A549 (cell line): ENCODE measurements at regions of chr16 and their contacts with region 1.

Region 1: GRCh38 chr16:10937068-10937859 is 5.0 kb downstream of the DEXI start:
- DNase-seq: no peak
- ATAC-seq: no peak
- H3K4me3 ChIP-seq: no peak overlapping the region
- H3K27ac ChIP-seq: no peak overlapping the region
- H3K4me1 ChIP-seq: peaks cover 14% of the 10 kb centered on the region
- CTCF ChIP-seq: no peak
- EP300 ChIP-seq: no peak
- POLR2A ChIP-seq: no peak
- RAD21 ChIP-seq: no peak

Region 2: DNA sequence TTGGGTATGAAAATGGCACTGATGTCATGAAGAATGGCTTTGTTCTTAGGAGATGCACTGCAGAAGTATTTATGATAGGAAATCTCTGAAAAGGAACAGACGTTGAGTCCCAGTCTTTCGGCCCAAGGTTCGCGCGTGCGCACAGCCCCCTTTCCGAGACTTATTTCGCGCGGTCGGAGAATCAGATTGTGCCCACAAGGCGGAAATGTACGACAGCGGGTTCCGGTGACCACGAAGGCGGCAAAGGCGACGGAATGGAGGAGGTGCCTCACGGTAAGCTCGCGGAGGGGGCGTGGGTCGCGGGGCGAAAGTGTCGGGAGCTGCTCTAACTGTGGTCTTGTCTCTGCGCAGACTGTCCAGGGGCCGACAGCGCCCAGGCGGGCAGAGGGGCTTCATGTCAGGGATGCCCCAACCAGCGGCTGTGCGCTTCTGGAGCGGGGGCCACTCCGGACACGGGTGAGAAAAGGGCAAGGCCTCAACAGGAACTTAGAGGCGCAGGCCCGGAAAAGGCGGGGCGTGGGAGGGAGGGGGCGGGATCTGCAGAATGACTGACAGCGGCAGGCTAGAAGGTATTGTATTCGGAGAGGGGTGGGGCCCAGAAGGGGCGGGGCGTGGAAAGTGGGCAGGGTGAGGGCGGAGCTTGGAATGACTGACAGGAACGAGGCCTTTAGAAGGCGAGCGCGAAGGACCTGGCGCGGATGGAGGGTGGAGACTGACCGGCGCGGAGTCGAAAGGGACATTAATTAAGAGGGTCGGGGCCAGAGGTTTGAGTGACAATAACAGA is 193.5 kb before region 1 on chr16 and contains the start of gene NUBP1:
- CTCF ChIA-PET with region 1: no interaction called
- POLR2A ChIA-PET with region 1: interaction called, 10 read pairs
- DNase-seq: peak; percentile 93 to 99
- ATAC-seq: peak; percentile 96
- H3K4me3 ChIP-seq: peak within 1 kb of the TSS; percentile 46
- H3K27ac ChIP-seq: peak within 1 kb of the TSS; percentile 89 to 95
- H3K4me1 ChIP-seq: peaks cover 17% of the 10 kb centered on the region; the same call in 2 of the 3 replicates
- CTCF ChIP-seq: no peak
- EP300 ChIP-seq: no peak
- POLR2A ChIP-seq: peak; percentile 72
- RAD21 ChIP-seq: no peak
- polyA plus RNA-seq, gene NUBP1: 33.9 and 34.1 TPM in 2 replicates

Region 3: DNA sequence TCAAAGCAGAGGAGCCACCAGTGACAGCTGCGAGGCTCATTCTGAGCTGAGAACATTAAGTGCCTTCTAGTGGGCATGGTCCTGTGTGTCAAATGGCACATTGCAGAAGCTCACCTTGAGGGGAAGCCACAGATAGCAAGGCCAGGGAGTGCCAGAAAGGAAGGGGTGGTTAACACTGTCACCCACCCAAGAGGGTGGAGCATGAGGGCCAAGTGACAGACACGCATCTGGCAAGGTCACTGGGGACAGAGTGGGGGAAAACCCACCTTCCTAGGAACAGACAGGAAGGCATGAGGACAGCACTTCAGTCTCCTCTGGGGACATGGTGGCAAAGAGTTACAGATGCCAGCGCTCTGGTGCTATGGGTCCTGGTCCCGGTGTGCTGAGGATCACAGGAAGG is 171.5 kb before region 1 on chr16:
- CTCF ChIA-PET with region 1: no interaction called
- POLR2A ChIA-PET with region 1: no interaction called
- DNase-seq: no peak
- ATAC-seq: no peak
- H3K4me3 ChIP-seq: no peak overlapping the region
- H3K27ac ChIP-seq: no peak overlapping the region
- H3K4me1 ChIP-seq: no peaks in the 10 kb centered on the region
- CTCF ChIP-seq: no peak
- EP300 ChIP-seq: no peak
- POLR2A ChIP-seq: no peak
- RAD21 ChIP-seq: no peak

Region 4: DNA sequence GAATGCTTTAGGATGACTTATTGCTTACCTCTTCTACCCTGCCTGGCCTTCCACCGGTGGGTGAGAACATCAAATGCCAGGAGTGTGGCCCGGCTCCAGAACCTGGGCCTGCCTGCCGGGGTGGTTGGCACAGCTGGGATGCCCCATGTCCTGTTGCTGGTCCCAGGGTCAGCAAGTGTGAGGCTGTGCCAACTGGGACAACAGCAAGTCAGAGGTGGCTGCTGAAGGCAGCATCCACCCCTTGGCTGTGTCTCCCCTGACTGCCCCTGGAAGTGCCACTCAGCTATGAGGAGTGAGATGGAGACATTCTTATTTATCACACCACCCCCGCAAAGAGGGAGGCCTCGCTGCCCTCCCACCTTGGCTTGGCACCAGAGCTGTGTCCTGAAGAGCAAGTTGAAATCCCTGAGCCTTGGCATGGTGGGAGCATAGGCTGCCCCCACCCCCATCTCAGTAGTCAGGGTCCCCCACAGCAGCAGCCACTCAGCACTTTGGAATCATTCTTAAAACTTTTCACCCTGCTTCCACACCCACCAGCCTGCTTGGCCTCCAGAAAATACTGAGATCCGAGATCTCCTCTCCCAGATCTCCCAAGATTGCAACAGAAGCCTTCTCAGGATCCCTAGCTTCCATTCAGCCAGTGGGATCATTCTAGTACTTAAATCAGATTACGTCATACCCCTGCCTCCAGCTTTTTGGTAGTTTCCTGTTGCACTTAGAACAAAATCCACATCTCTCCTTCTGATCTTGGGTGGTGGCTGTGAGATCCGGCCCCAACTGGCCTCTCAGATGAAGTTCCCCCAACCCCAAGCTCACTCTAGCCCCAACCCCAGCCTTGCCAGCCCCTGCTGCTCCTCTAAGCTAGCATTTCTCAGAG is 191.2 kb after region 1 on chr16:
- CTCF ChIA-PET with region 1: no interaction called
- POLR2A ChIA-PET with region 1: no interaction called
- DNase-seq: no peak
- ATAC-seq: no peak
- H3K4me3 ChIP-seq: no peak overlapping the region
- H3K27ac ChIP-seq: no peak overlapping the region
- H3K4me1 ChIP-seq: no peaks in the 10 kb centered on the region; the same call in 2 of the 3 replicates
- CTCF ChIP-seq: no peak
- EP300 ChIP-seq: no peak
- POLR2A ChIP-seq: no peak
- RAD21 ChIP-seq: no peak